ENCODE measurements at regions of chr19 and their contacts with region 1.

Region 1: DNA sequence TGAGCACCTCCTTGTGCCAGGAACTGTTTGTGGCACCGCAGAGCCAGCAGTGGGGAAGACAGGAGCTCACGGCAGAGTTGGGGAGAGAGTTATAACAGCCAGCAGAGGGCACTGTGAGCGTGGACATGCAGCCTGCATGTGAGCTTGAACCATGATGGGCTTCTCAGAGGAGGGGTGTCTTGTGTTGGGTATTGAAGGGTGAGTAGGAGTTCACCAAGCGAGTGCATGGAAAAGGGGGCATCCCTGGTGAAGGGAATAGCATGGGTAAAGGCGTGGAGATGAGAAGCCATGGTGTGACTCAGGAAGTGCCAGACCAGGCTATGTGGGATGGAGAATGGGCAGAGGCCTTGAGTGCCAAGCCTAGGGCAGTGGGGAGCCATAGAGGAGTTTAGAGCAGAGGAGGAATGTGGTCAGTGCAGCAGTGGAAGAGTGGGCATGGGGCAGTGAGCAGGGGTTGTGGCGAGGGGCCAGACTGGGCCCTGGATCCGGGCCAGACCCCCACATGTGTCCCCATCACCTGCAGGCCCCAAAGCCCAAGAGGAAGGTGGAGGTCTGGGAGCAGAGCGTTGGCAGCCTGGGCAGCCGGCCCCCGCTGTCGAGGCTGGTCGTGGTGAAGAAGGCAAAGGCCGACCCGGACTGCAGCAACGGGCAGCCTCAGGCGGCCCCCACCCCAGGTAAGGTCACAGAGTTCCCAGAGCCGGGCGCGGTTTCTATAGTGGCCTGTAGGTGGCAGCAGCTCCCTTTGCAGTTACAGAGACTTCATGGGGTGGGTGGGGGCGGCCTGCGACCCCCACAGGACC is 11.8 kb upstream of the SHD start:
- H3K4me3 ChIP-seq: no peak overlapping the region
- H3K27ac ChIP-seq: no peak overlapping the region
- H3K4me1 ChIP-seq: no peaks in the 10 kb centered on the region
- CTCF ChIP-seq: peak; percentile 91

Region 2: GRCh38 chr19:4246767-4247593 is 20.3 kb before region 1 on chr19 and contains the start of gene YJU2:
- CTCF ChIA-PET with region 1: interaction called, 13 read pairs
- POLR2A ChIA-PET with region 1: no interaction called
- H3K4me3 ChIP-seq: peak within 1 kb of the TSS; percentile 83
- H3K27ac ChIP-seq: peak within 1 kb of the TSS; percentile 54
- H3K4me1 ChIP-seq: no peaks in the 10 kb centered on the region; the same call in 1 of the 2 replicates
- CTCF ChIP-seq: peak; percentile 89

Region 3: GRCh38 chr19:4278419-4279266 is 11.3 kb after region 1 on chr19 and contains the start of gene SHD:
- CTCF ChIA-PET with region 1: interaction called, 12 read pairs
- POLR2A ChIA-PET with region 1: no interaction called
- H3K4me3 ChIP-seq: peak within 1 kb of the TSS; percentile 13
- H3K27ac ChIP-seq: no peak within 1 kb of the TSS
- H3K4me1 ChIP-seq: no peaks in the 10 kb centered on the region; the same call in 1 of the 2 replicates
- CTCF ChIP-seq: no peak

Region 4: DNA sequence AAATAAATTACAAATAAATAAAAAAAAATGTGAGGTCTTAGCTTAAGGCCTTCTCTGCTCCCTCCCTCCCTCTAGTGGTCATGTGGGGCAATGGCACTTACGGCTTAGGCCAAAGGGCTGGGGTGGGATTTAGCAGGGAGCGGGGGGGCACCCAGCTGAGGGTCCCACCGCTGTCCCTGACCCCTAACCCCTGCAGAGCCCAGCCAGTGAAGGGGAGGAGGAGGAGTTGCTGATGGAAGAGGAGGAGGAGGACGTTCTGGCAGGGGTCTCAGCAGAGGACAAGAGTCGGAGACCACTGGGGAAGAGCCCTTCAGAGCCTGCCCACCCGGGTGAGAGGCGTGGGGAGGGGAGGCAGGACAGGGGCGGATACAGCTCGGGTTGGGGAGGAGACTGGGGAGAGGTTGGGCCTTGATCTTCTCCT is 85.4 kb after region 1 on chr19:
- CTCF ChIA-PET with region 1: interaction called, 92 read pairs
- POLR2A ChIA-PET with region 1: interaction called, 11 read pairs
- H3K4me3 ChIP-seq: no peak overlapping the region
- H3K27ac ChIP-seq: no peak overlapping the region
- H3K4me1 ChIP-seq: no peaks in the 10 kb centered on the region
- CTCF ChIP-seq: peak; percentile 52; the same call in 1 of the 2 replicates

Region 5: GRCh38 chr19:4369888-4370260 is 102.6 kb after region 1 on chr19:
- CTCF ChIA-PET with region 1: interaction called, 14 read pairs
- POLR2A ChIA-PET with region 1: no interaction called
- H3K4me3 ChIP-seq: no peak overlapping the region
- H3K27ac ChIP-seq: peak overlapping the region; percentile 24; the same call in 1 of the 2 replicates
- H3K4me1 ChIP-seq: 0 out of 2 replicates have a peak, but pooled peaks cover 5% of the 10 kb centered on the region
- CTCF ChIP-seq: peak; percentile 45

Region 6: GRCh38 chr19:4400135-4400936 is 133.0 kb after region 1 on chr19 and contains the start of gene SH3GL1:
- CTCF ChIA-PET with region 1: interaction called, 29 read pairs
- POLR2A ChIA-PET with region 1: interaction called, 7 read pairs
- H3K4me3 ChIP-seq: peak within 1 kb of the TSS; percentile 95
- H3K27ac ChIP-seq: peak within 1 kb of the TSS; percentile 84
- H3K4me1 ChIP-seq: no peaks in the 10 kb centered on the region
- CTCF ChIP-seq: peak; percentile 98

Region 7: DNA sequence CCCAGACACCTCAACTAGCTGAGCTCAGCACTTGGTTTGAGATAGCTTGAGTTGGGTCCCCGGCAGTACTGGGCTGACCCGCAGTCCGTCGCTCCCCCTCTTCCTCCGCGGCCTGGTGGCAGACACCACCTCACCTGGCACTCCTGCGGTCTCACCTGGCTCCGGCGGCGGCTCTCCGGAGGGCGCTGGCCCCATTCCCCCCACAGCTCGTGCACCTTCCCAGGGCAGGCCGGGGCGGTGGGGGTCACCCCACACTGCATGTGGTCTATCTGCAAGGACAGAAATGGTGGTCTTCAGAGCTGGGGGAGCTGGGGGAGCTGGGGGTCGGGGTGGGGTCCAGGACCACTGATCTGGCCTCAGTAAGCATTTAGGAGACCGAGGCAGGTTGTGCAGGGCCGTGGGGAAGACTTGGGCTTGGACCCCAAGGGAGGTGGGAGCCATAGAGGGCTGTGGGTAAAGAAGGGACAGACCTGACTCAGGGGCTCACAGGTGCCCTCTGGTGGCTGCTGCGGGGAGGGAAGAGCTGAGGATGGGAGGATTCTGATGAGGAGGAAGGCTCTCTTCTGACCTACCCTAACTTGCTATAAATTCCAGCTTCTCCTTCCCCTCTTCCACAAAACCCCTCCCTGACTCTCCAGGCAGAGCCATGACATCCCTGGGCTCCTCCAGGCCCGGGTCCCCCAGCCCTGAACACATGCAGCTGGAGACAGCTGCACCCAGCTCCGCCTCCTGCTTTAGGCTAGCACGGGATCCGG is 257.7 kb after region 1 on chr19:
- CTCF ChIA-PET with region 1: interaction called, 41 read pairs
- POLR2A ChIA-PET with region 1: interaction called, 4 read pairs
- H3K4me3 ChIP-seq: no peak overlapping the region
- H3K27ac ChIP-seq: no peak overlapping the region
- H3K4me1 ChIP-seq: no peaks in the 10 kb centered on the region
- CTCF ChIP-seq: peak; percentile 74

Measured in HEK293 (cell line).